ENCODE measurements at regions of chr3 and their contacts with region 1.

Region 1: GRCh38 chr3:133661454-133662277 is at the start of gene TOPBP1:
- DNase-seq: peak; percentile 72 to 97 (median 85)

Region 2: GRCh38 chr3:133610031-133610430 is 51.6 kb before region 1 on chr3:
- intact Hi-C with region 1: no loop called
- DNase-seq: no peak

Region 3: DNA sequence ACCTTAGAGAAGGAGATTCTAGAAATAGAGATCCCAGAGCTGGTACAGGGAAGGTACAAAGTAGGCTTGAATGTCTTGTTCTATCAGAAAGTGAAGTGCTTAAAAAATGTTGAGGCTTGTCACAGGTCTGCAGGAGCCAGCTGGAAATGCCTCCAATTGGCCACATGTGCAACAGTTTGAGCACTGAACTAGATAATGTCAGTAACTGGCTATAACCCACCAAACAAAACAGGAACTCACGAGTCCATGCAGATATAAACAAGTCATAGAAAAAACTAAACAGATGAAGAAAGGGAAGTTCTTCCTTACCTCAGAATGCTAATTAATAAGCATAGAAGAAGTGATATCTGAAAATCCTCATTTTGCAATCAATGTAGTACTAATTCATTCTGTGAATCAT is 72.6 kb after region 1 on chr3:
- intact Hi-C with region 1: no loop called
- DNase-seq: no peak

Region 4: DNA sequence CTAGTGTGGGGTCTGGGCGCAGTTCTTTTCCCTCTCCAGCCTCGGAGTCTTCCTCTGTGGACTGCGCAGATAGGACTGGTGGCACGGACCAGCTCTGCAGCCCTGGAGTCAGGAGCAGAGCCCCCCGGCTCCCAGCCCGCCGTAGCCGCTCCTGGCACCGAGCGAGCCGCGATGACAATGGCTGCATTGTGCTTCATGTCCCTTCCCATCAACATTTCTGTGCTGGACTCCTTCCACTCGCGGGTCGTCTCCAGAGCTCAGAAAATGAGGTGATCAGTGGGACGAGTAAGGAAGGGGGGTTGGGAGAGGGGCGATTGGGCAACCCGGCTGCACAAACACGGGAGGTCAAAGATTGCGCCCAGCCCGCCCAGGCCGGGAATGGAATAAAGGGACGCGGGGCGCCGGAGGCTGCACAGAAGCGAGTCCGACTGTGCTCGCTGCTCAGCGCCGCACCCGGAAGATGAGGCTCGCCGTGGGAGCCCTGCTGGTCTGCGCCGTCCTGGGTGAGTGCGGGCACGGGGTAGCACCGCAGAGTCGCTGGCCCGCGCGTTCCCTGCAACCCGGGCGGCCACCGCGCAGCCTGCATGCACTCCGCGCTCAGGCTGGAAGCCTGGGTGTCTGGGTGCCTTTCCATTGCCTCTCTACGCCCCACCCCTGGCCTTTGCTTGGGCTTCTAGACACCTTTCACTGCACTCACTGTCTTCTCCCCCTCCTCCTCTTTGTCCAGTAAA is 84.5 kb after region 1 on chr3 and contains the start of gene TF:
- intact Hi-C with region 1: loop called (anchors 5 kb)
- DNase-seq: peak; percentile 73 to 98 (median 90)

Region 5: DNA sequence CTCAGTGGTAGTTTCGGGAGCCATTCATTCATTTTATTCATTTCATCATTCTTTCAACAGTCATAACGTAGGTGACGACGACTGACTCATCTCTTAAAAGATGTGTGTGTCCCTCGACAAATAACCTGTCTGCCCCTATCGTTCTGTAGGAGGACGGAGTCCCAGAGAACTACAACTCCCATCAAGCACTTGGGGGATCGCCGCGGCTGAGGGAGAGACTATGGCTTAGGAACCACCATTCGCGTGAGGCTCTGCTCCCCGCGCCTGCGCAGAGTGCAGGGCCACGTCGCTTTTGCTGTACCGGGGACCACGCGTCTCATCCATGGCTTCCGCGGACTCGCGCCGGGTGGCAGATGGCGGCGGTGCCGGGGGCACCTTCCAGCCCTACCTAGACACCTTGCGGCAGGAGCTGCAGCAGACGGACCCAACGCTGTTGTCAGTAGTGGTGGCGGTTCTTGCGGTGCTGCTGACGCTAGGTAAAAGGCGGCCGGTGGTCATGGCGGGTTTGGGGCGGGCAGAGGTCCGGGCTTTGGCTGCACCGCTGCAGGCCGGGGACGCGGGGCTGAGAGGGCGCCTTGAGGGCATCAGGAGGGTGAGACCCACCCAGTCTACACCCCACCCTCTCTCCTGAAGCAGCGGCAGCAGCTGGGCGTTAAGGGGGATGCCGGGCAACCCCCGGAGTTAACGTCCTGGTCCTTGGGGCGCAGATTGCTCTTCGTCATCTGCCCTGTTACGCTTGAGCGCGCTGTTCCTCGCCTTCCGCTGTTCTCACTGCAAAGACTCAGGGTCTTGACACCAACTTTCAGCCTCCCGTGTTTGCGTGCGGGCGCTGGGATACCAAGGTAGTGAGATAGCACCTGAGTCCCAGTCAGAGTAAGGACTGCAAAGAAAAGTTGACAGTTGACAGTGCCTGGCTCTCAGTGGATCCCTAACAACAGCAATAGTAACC is 144.1 kb after region 1 on chr3 and contains the start of gene SRPRB:
- intact Hi-C with region 1: loop called (anchors 5 kb)
- DNase-seq: peak; percentile 93 to 99 (median 97)

Region 6: DNA sequence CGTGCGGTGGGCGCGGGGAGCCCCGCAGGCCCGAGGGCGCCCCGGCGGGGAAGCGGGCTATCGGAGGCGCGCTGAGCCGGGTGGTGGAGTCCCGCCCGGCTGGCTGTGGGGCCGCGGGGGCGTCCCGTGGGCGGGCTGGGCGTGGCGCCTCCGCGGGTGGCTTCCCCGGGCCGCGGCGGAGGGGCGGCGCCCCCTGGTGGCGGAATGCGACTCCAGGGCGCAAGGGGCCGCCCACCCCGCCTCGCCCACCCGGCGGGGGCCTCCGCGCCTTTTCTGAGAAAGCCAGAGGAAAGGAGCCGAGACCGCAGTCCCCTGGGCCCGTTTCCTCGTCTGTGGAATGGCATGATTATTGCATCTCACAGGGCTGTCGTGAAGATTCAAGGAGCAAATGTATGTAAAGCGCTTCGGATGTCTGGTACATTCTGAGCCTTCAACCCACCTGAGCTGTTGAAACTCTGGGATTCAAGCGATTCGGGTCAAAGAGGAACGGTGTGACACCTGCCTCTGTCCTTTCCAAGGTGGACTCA is 265.9 kb after region 1 on chr3:
- intact Hi-C with region 1: loop called (anchors 10 kb)
- DNase-seq: peak in 7 of 10 donors; percentile 34 to 93 (median 47)